ENCODE measurements at regions of chr4 and their contacts with region 1.

Region 1: GRCh38 chr4:184250795-184251669 is 33.4 kb upstream of the ENPP6 start:
- DNase-seq: peak; percentile 59 to 78 (median 72)
- H3K4me3 ChIP-seq: no peak overlapping the region
- H3K27ac ChIP-seq: no peak overlapping the region
- H3K4me1 ChIP-seq: no peaks in the 10 kb centered on the region
- H3K27me3 ChIP-seq: no peaks in the 10 kb centered on the region

Region 2: DNA sequence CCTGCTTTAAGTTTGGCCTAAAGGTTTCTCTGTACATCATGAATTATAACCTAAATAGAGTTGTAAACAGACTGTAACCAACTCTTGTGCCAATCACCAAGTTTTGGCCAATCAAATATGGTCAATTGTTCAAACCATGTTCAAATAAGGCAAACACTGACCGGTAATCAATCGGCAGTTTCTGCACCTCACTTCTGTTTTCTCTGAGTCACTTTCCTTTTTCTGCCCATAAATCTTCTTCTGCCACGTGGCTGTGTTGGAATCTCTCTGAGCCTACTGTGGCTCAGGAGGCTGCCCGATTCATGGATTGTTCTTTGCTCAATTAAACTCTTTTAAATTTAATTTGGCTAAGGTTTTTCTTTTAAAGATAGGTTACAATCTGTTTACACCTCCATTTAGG is 16.9 kb before region 1 on chr4:
- CTCF ChIA-PET with region 1: interaction called, 15 read pairs
- POLR2A ChIA-PET with region 1: no interaction called
- DNase-seq: peak in 2 of 3 donors; percentile 30 to 44
- H3K4me3 ChIP-seq: no peak overlapping the region
- H3K27ac ChIP-seq: no peak overlapping the region
- H3K4me1 ChIP-seq: peaks cover 4 to 20% (median 13%) of the 10 kb centered on the region in 4 experiments
- H3K27me3 ChIP-seq: peaks cover 0 to 2% (median 0%) of the 10 kb centered on the region in 5 experiments

Measured in common myeloid progenitor, CD34-positive (primary cell).